K562 (cell line): ENCODE measurements at regions of chr19 and their contacts with region 1.

Region 1: GRCh38 chr19:9796113-9796773 is 22.6 kb downstream of the FBXL12 start:
- DNase-seq: peak; percentile 53 to 91 (median 59)
- ATAC-seq: peak; percentile 63
- H3K4me3 ChIP-seq: no peak overlapping the region
- H3K27ac ChIP-seq: no peak overlapping the region
- H3K4me1 ChIP-seq: peaks cover 3 to 7% of the 10 kb centered on the region in 2 experiments; a peak in 4 of 5 replicates
- H3K27me3 ChIP-seq: no peaks in the 10 kb centered on the region
- CTCF ChIP-seq: peak; percentile 84 to 91 (median 85)
- EP300 ChIP-seq: no peak
- POLR2A ChIP-seq: no peak
- RAD21 ChIP-seq: peak; percentile 92 to 98

Region 2: DNA sequence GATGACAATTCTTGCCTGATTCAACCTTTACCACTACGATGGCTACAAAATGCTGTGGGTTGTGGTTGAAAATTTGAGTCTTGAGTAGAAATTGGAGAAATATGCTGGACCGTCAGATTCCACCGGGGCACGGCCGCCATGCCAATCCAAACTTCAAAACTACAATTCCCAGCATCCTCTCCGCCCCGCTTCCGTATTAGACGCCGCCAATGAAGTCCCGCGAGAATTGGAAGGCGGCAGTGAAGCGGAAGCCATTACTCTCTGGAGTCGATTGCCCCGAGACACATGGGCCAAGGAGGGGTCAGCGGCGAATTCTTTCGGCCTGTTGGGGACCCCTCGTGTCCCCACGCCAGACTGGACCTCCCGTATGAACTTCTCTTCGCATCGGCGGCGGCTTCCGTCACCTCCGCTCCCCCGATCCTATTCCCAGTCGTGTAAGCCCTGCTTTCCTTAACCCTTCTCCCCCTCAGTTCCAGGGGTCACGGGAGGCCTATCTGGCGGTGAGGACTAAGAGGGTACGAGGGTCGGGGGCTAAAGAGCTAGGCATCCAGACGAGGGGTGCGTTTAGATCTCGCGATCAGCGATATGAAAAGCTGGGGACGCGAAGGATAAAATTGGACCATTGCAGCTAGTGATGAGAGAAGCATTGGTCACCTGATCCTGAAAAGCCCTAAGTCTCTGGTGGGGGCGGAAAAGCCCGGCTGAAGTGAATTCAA is 655.9 kb before region 1 on chr19 and contains the start of gene ZNF317:
- CTCF ChIA-PET with region 1: interaction called, 7 read pairs
- POLR2A ChIA-PET with region 1: no interaction called
- in situ Hi-C with region 1: loop called (anchors 10 kb)
- intact Hi-C with region 1: no loop called
- DNase-seq: peak; percentile 81 to 96 (median 85)
- ATAC-seq: peak; percentile 97
- H3K4me3 ChIP-seq: peak within 1 kb of the TSS; percentile 61
- H3K27ac ChIP-seq: peak within 1 kb of the TSS; percentile 92
- H3K4me1 ChIP-seq: peaks cover 0 to 9% of the 10 kb centered on the region in 2 experiments; a peak in 2 of 5 replicates
- H3K27me3 ChIP-seq: no peaks in the 10 kb centered on the region
- CTCF ChIP-seq: no peak; a peak in 1 of 6 replicates
- EP300 ChIP-seq: no peak
- POLR2A ChIP-seq: peak; percentile 95
- RAD21 ChIP-seq: no peak
- polyA plus RNA-seq, gene ZNF317: 23.9 to 37.9 TPM

Region 3: DNA sequence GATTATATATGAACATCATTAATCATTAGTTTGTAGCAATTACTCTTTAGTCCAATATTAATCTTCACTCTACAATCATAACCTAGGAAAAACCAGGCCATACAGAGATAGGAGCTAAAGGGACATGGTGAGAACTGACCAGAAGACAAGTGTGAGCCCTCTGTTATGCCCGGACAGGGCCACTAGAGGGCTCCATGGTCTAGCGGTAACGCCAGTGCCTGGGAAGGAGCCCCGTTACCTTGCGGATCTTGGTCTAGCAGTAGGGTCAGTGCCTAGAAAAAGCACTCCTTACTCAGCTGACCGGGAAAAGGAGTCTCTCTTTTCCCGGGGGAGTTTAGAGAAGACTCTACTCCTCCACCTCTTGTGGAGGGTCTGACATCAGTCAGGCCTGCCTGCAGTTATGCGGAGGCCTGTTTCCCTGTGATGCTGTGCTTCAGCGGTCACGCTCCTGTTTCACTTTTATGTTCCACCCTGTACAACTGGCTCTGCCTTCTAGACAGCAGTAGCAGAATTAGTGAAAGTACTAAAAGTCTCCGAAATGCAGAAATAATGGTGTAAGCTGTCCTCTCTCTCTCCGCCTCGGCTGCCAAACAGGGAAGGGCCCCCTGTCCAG is 590.6 kb before region 1 on chr19:
- CTCF ChIA-PET with region 1: interaction called, 4 read pairs
- POLR2A ChIA-PET with region 1: no interaction called
- in situ Hi-C with region 1: no loop called
- intact Hi-C with region 1: loop called (anchors 5 kb)
- DNase-seq: peak; percentile 53 to 74 (median 57)
- ATAC-seq: peak; percentile 88
- H3K4me3 ChIP-seq: no peak overlapping the region
- H3K27ac ChIP-seq: no peak overlapping the region
- H3K4me1 ChIP-seq: no peaks in the 10 kb centered on the region
- H3K27me3 ChIP-seq: peaks cover 6 to 9% of the 10 kb centered on the region in 2 experiments; a peak in 4 of 5 replicates
- CTCF ChIP-seq: peak; percentile 79 to 87 (median 83)
- EP300 ChIP-seq: no peak
- POLR2A ChIP-seq: no peak
- RAD21 ChIP-seq: peak; percentile 67 to 92

Region 4: GRCh38 chr19:9309139-9309973 is 486.9 kb before region 1 on chr19 and contains the start of gene ZNF699:
- CTCF ChIA-PET with region 1: no interaction called
- POLR2A ChIA-PET with region 1: interaction called, 3 read pairs
- in situ Hi-C with region 1: no loop called
- intact Hi-C with region 1: loop called (anchors 5 kb)
- DNase-seq: peak; percentile 94 to 98 (median 94)
- ATAC-seq: peak; percentile 95
- H3K4me3 ChIP-seq: peak within 1 kb of the TSS; percentile 99
- H3K27ac ChIP-seq: peak within 1 kb of the TSS; percentile 84
- H3K4me1 ChIP-seq: peaks cover 3 to 6% of the 10 kb centered on the region in 2 experiments; a peak in 2 of 5 replicates
- H3K27me3 ChIP-seq: no peaks in the 10 kb centered on the region
- CTCF ChIP-seq: no peak
- EP300 ChIP-seq: no peak
- POLR2A ChIP-seq: peak; percentile 80
- RAD21 ChIP-seq: no peak
- polyA plus RNA-seq, gene ZNF699: 0.08 to 0.25 TPM

Region 5: DNA sequence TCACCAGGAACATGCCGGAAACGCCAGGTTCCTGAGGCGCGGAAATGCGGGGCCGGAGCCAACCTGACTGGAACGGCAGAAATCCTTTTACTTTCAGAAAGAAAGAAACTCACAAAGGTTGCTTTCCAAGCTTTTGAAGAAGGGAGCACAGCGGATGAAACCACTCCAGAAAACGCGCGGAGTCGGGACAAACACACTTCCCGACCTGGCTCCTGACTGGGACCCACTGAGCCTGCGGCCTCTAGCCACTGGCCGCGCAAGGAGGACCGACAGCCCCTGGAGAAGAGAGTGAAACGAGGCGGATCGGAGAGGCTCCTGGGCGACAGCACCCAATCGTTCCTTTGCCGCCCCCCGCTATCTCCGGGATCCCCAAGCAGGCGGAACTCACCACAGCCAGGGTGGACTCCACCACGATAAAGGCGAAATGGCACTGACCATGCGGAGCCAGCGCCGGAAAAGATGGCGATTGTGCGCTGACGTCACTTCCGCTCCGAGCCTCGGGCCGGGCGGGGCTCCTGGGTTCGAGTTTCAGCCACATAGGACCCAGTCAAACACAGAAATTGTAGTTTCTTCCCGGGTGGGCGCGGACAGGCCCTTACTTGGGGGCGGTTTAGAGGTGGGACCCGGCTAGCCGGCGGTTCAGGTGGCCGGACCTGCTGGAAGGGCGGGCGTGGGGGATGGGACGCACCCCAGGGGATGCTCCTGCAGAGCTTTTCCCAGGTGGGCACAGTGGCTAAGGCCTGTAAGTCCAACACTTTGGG is 212.0 kb before region 1 on chr19 and contains the start of gene ZNF121:
- CTCF ChIA-PET with region 1: interaction called, 5 read pairs
- POLR2A ChIA-PET with region 1: no interaction called
- in situ Hi-C with region 1: no loop called
- intact Hi-C with region 1: loop called (anchors 2 kb)
- DNase-seq: peak; percentile 85 to 94 (median 87)
- ATAC-seq: peak; percentile 93
- H3K4me3 ChIP-seq: peak within 1 kb of the TSS; percentile 86
- H3K27ac ChIP-seq: peak within 1 kb of the TSS; percentile 99
- H3K4me1 ChIP-seq: peaks cover 0 to 6% of the 10 kb centered on the region in 2 experiments; a peak in 3 of 5 replicates
- H3K27me3 ChIP-seq: peaks cover 4% of the 10 kb centered on the region in 2 experiments; a peak in 3 of 5 replicates
- CTCF ChIP-seq: no peak
- EP300 ChIP-seq: 0 out of 2 replicates have a peak, but pooled peaks have one; percentile 12
- POLR2A ChIP-seq: peak; percentile 96
- RAD21 ChIP-seq: no peak
- polyA plus RNA-seq, gene ZNF121: 14.6 to 26.2 TPM

Region 6: GRCh38 chr19:9621156-9622037 is 174.8 kb before region 1 on chr19 and contains the start of gene ZNF561:
- CTCF ChIA-PET with region 1: interaction called, 25 read pairs
- POLR2A ChIA-PET with region 1: no interaction called
- in situ Hi-C with region 1: loop called (anchors 5 kb)
- intact Hi-C with region 1: no loop called
- DNase-seq: peak; percentile 89 to 92 (median 91)
- ATAC-seq: peak; percentile 95
- H3K4me3 ChIP-seq: peak within 1 kb of the TSS; percentile 86
- H3K27ac ChIP-seq: peak within 1 kb of the TSS; percentile 98
- H3K4me1 ChIP-seq: peaks cover 0 to 3% of the 10 kb centered on the region in 2 experiments; a peak in 2 of 5 replicates
- H3K27me3 ChIP-seq: no peaks in the 10 kb centered on the region
- CTCF ChIP-seq: no peak
- EP300 ChIP-seq: no peak
- POLR2A ChIP-seq: peak; percentile 89
- RAD21 ChIP-seq: no peak
- polyA plus RNA-seq, gene ZNF561: 19.2 to 25.6 TPM

Region 7: GRCh38 chr19:9627856-9628255 is 168.4 kb before region 1 on chr19:
- CTCF ChIA-PET with region 1: interaction called, 25 read pairs
- POLR2A ChIA-PET with region 1: no interaction called
- in situ Hi-C with region 1: loop called (anchors 5 kb)
- intact Hi-C with region 1: no loop called
- DNase-seq: no peak
- ATAC-seq: no peak
- H3K4me3 ChIP-seq: no peak overlapping the region
- H3K27ac ChIP-seq: no peak overlapping the region
- H3K4me1 ChIP-seq: peaks cover 0 to 3% of the 10 kb centered on the region in 2 experiments; a peak in 1 of 5 replicates
- H3K27me3 ChIP-seq: no peaks in the 10 kb centered on the region
- CTCF ChIP-seq: no peak
- EP300 ChIP-seq: no peak
- POLR2A ChIP-seq: no peak
- RAD21 ChIP-seq: no peak

Region 8: DNA sequence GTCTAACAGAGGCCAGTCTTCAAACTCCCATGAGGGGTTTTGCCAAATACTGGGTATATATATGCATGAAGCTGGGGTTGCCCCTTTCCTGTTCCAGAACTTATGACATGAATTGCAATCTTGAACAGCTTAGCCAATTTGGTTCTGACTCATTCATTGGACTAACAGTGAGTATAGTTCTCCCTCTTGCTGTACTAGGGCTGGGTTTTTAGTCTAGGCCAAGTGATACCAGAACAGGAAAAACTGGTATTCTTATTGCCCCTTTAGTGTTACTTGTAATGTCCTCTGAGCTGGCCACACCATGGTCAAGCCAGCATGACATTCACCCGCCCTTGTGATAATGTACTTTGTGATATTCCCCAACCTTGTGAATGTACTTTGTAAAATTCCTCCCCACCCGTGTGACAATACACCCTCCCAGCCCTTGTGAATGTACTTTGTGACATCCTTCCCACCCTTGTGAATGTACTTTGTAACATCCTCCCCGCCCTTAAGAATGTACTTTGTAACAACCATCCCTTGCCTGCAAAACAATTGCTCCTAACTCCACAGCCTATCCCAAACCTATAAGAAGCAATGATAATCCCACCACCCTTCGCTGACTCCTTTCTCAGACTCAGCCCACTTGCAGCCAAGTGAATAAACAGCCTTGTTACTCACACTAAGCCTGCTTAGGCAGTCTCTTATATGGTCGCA is 54.6 kb before region 1 on chr19:
- CTCF ChIA-PET with region 1: no interaction called
- POLR2A ChIA-PET with region 1: no interaction called
- in situ Hi-C with region 1: no loop called
- intact Hi-C with region 1: no loop called
- DNase-seq: no peak
- ATAC-seq: no peak
- H3K4me3 ChIP-seq: no peak overlapping the region
- H3K27ac ChIP-seq: no peak overlapping the region
- H3K4me1 ChIP-seq: no peaks in the 10 kb centered on the region
- H3K27me3 ChIP-seq: no peaks in the 10 kb centered on the region; a peak in 1 of 5 replicates
- CTCF ChIP-seq: no peak
- EP300 ChIP-seq: no peak
- POLR2A ChIP-seq: no peak
- RAD21 ChIP-seq: no peak

Region 9: DNA sequence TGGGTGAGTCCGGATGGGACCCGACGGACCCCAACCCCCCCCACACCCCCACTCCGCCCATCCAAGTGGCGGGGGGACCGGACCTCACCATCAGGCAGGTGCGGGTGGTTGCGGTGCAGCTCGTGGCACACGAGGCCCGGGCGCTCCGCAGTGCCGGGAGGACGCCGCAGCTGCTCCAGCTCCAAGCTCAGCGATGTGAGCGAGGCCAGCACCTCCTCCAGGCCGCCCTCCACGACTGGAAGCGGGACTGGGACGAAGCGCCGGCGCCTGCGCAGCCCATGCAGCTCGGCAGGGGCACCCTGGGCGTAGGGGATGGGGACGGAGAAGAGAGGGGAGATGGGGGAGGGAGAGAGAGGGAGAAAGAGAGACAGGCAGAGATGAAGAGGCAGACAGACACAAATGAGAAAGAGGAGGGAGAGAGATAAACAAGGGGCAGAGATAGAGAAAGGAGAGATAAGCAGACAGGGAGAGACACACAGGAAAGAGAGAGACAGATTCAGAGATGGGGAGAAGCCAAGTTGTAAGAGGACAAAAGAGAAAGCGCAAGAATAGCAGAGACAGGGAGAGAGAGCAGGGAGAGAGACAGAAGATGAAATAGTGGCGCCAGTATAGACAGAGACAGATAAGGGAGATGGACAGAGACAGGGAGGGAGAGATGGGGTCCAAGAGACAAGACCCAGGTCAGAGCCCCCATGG is 170.4 kb after region 1 on chr19:
- CTCF ChIA-PET with region 1: no interaction called
- POLR2A ChIA-PET with region 1: no interaction called
- in situ Hi-C with region 1: no loop called
- intact Hi-C with region 1: no loop called
- DNase-seq: no peak
- ATAC-seq: no peak
- H3K4me3 ChIP-seq: no peak overlapping the region
- H3K27ac ChIP-seq: no peak overlapping the region
- H3K4me1 ChIP-seq: no peaks in the 10 kb centered on the region
- H3K27me3 ChIP-seq: peaks cover 3 to 18% of the 10 kb centered on the region in 2 experiments; a peak in 4 of 5 replicates
- CTCF ChIP-seq: no peak
- EP300 ChIP-seq: no peak
- POLR2A ChIP-seq: no peak
- RAD21 ChIP-seq: no peak